ENCODE measurements at regions of chr9 and their contacts with region 1.

Region 1: DNA sequence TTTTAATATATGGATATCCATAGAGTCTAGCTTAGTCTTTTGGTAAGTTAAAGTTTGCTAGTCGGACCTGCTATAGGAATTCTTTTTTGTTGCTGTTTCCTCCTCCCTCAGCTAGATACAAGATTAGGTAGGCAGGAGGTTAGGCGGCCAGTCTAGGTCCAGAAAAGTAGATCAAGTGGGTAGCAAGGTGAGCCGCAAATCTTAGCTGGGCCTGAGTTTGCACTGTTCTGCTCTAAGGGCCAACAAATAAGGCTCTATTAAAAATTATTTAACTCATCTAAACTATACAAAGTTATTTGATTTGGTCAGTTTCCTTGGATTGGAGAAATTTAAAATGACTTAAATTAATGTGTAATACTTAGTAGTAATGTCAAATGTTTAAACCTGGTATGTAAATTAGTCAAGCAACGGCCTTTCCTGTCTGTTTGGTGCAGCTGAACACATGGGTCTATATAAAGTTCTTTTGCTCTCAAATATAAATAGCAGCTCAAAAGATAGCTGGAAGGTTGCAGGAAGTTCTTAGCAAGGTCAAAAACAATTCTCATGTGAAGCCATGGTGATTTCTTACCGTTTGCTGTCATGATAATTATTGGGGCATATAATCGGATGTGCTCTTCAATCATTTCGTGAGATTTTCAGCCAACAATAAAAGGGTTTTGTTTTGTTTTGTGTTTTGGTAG is 72.0 kb downstream of the PRKACG start:
- DNase-seq: no peak
- ATAC-seq: peak; percentile 74

Region 2: GRCh38 chr9:68872026-68872501 is 69.9 kb before region 1 on chr9:
- intact Hi-C with region 1: loop called (anchors 5 kb)
- DNase-seq: peak; percentile 73
- ATAC-seq: peak; percentile 95

Region 3: DNA sequence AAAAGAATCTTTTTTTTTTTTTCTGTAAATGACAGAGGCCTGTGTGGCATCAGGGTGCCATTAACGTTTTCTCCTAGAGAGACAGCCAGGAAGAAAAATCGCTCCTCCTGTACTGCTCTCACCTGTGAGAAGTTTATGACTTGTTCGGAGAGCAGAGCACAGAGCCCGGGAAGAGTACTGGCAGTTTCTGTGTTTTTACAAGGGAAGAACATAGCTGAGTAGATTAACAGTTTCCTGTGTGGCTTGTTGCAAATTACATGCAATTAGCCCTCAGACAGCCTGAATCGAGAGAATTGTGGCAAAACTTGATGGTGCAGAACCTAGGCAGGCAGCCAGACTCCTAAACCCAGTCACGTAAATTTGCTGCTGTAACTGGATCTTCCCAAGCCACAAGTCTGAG is 39.9 kb after region 1 on chr9:
- intact Hi-C with region 1: loop called (anchors 5 kb)
- DNase-seq: no peak
- ATAC-seq: no peak

Measured in Right ventricle myocardium inferior (tissue), 1 donor.